ENCODE measurements at regions of chr3 and their contacts with region 1.

Region 1: GRCh38 chr3:112136959-112137693 is 4.1 kb upstream of the GCSAM start:
- DNase-seq: no peak
- ATAC-seq: peak; percentile 42
- H3K4me3 ChIP-seq: no peak overlapping the region
- H3K27ac ChIP-seq: peak overlapping the region; percentile 99
- H3K4me1 ChIP-seq: peaks cover 47% of the 10 kb centered on the region
- H3K27me3 ChIP-seq: no peaks in the 10 kb centered on the region
- CTCF ChIP-seq: peak; percentile 67 to 88 (median 81); a peak in 5 of 6 replicates
- EP300 ChIP-seq: 0 out of 4 replicates have a peak, but pooled peaks of 1 of the 2 experiments have one; percentile 32
- POLR2A ChIP-seq: peak; percentile 67
- RAD21 ChIP-seq: peak; percentile 94

Region 2: GRCh38 chr3:112111785-112112402 is 25.2 kb before region 1 on chr3:
- CTCF ChIA-PET with region 1: interaction called, 226 read pairs
- POLR2A ChIA-PET with region 1: interaction called, 345 read pairs
- RAD21 ChIA-PET with region 1: interaction called, 457 read pairs
- SMC1A ChIA-PET with region 1: interaction called, 489 read pairs
- in situ Hi-C with region 1: no loop called
- intact Hi-C with region 1: loop called (anchors 1 kb)
- DNase-seq: no peak
- ATAC-seq: peak; percentile 59
- H3K4me3 ChIP-seq: no peak overlapping the region
- H3K27ac ChIP-seq: peak overlapping the region; percentile 95
- H3K4me1 ChIP-seq: peaks cover 46% of the 10 kb centered on the region
- H3K27me3 ChIP-seq: no peaks in the 10 kb centered on the region
- CTCF ChIP-seq: peak; percentile 91 to 98 (median 93); a peak in 5 of 6 replicates
- EP300 ChIP-seq: no peak
- POLR2A ChIP-seq: no peak
- RAD21 ChIP-seq: peak; percentile 100

Region 3: GRCh38 chr3:112303764-112304325 is 166.7 kb after region 1 on chr3:
- CTCF ChIA-PET with region 1: interaction called, 7 read pairs
- POLR2A ChIA-PET with region 1: no interaction called
- RAD21 ChIA-PET with region 1: interaction called, 3 read pairs
- SMC1A ChIA-PET with region 1: interaction called, 10 read pairs
- in situ Hi-C with region 1: no loop called
- intact Hi-C with region 1: no loop called
- DNase-seq: no peak
- ATAC-seq: peak; percentile 64
- H3K4me3 ChIP-seq: peak overlapping the region; percentile 50; the same call in 1 of the 2 replicates
- H3K27ac ChIP-seq: 0 out of 2 replicates have a peak overlapping the region, but pooled peaks have one; percentile 21
- H3K4me1 ChIP-seq: peaks cover 9% of the 10 kb centered on the region
- H3K27me3 ChIP-seq: no peaks in the 10 kb centered on the region
- CTCF ChIP-seq: no peak
- EP300 ChIP-seq: no peak
- POLR2A ChIP-seq: no peak
- RAD21 ChIP-seq: no peak

Region 4: DNA sequence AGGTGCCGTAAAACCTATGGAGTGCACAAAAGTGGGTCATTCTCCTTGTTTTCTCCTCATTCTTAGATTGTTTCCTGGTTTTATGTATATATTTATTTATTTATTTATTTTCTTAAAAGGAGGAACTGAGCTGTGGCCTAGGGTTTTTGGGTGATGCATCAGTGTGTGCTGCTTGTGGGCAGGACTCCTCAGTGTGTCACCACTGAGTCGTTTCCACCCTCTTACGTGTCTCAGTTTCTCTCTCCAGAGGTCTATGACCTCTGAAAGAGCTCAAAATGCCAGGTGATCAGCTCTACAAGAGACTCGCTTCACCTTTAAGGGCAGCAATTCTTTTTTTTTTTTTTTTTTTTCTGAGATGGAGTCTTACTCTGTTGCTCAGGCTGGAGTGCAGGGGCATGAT is 268.7 kb after region 1 on chr3:
- CTCF ChIA-PET with region 1: interaction called, 6 read pairs
- POLR2A ChIA-PET with region 1: interaction called, 3 read pairs
- RAD21 ChIA-PET with region 1: interaction called, 4 read pairs
- SMC1A ChIA-PET with region 1: interaction called, 4 read pairs
- in situ Hi-C with region 1: no loop called
- intact Hi-C with region 1: loop called (anchors 2 kb)
- DNase-seq: no peak
- ATAC-seq: peak; percentile 72
- H3K4me3 ChIP-seq: no peak overlapping the region
- H3K27ac ChIP-seq: no peak overlapping the region; the same call in 1 of the 2 replicates
- H3K4me1 ChIP-seq: peaks cover 27% of the 10 kb centered on the region
- H3K27me3 ChIP-seq: no peaks in the 10 kb centered on the region
- CTCF ChIP-seq: no peak
- EP300 ChIP-seq: no peak
- POLR2A ChIP-seq: no peak
- RAD21 ChIP-seq: no peak

Region 5: GRCh38 chr3:112489674-112490479 is 352.8 kb after region 1 on chr3:
- CTCF ChIA-PET with region 1: interaction called, 11 read pairs
- POLR2A ChIA-PET with region 1: interaction called, 33 read pairs
- RAD21 ChIA-PET with region 1: interaction called, 48 read pairs
- SMC1A ChIA-PET with region 1: interaction called, 9 read pairs
- in situ Hi-C with region 1: no loop called
- intact Hi-C with region 1: loop called (anchors 10 kb)
- DNase-seq: peak; percentile 75
- ATAC-seq: peak; percentile 61
- H3K4me3 ChIP-seq: peak overlapping the region; percentile 51
- H3K27ac ChIP-seq: peak overlapping the region; percentile 97
- H3K4me1 ChIP-seq: peaks cover 13% of the 10 kb centered on the region; the same call in 1 of the 2 replicates
- H3K27me3 ChIP-seq: no peaks in the 10 kb centered on the region
- CTCF ChIP-seq: no peak
- EP300 ChIP-seq: peak in 1 of 2 experiments; percentile 27; a peak in 1 of 4 replicates
- POLR2A ChIP-seq: no peak
- RAD21 ChIP-seq: 0 out of 2 replicates have a peak, but pooled peaks have one; percentile 22

Region 6: DNA sequence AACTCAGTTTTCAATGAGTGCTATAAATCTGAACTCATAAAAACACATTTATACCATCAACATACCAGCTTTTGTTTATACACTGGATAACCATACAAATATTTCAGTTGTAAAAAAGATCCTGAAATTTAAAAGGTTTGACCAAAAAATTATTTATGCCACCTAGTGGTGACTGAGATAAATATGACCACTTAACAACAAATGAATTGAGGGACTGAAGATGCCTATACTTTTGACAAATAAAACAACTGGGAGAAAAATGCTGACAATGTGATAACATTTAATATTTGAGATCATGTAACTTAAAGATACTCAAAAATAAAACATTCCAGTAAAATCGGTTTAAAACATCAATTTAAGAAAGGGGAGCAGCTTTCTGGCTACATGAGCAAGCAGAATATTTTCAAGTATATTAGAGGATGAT is 394.2 kb after region 1 on chr3:
- CTCF ChIA-PET with region 1: interaction called, 27 read pairs
- POLR2A ChIA-PET with region 1: no interaction called
- RAD21 ChIA-PET with region 1: interaction called, 14 read pairs
- SMC1A ChIA-PET with region 1: interaction called, 20 read pairs
- in situ Hi-C with region 1: no loop called
- intact Hi-C with region 1: loop called (anchors 2 kb)
- DNase-seq: no peak
- ATAC-seq: peak; percentile 39; the same call in 2 of the 3 replicates
- H3K4me3 ChIP-seq: no peak overlapping the region
- H3K27ac ChIP-seq: no peak overlapping the region
- H3K4me1 ChIP-seq: no peaks in the 10 kb centered on the region
- H3K27me3 ChIP-seq: no peaks in the 10 kb centered on the region
- CTCF ChIP-seq: peak; percentile 21 to 43 (median 41); a peak in 3 of 6 replicates
- EP300 ChIP-seq: no peak
- POLR2A ChIP-seq: no peak
- RAD21 ChIP-seq: peak; percentile 36; the same call in 1 of the 2 replicates